Endothelial cell of umbilical vein (primary cell): ENCODE measurements at regions of chr12 and their contacts with region 1.

Region 1: GRCh38 chr12:2034633-2035430 is 18.0 kb upstream of the CACNA1C start:
- DNase-seq: peak; percentile 69
- H3K4me3 ChIP-seq: no peak overlapping the region
- H3K27ac ChIP-seq: no peak overlapping the region
- H3K4me1 ChIP-seq: peaks cover 2% of the 10 kb centered on the region
- H3K27me3 ChIP-seq: peaks cover 12 to 24% of the 10 kb centered on the region in 2 experiments
- CTCF ChIP-seq: peak; percentile 90 to 94
- POLR2A ChIP-seq: no peak

Region 2: GRCh38 chr12:1611803-1612572 is 422.8 kb before region 1 on chr12:
- CTCF ChIA-PET with region 1: no interaction called
- POLR2A ChIA-PET with region 1: no interaction called
- dilution Hi-C with region 1: no loop called
- intact Hi-C with region 1: no loop called
- DNase-seq: peak; percentile 36
- H3K4me3 ChIP-seq: no peak overlapping the region
- H3K27ac ChIP-seq: no peak overlapping the region
- H3K4me1 ChIP-seq: no peaks in the 10 kb centered on the region
- H3K27me3 ChIP-seq: peaks cover 1 to 6% of the 10 kb centered on the region in 2 experiments
- CTCF ChIP-seq: no peak
- POLR2A ChIP-seq: no peak

Region 3: GRCh38 chr12:1804545-1805332 is 230.1 kb before region 1 on chr12:
- CTCF ChIA-PET with region 1: no interaction called
- POLR2A ChIA-PET with region 1: no interaction called
- dilution Hi-C with region 1: no loop called
- intact Hi-C with region 1: loop called (anchors 2 kb)
- DNase-seq: peak; percentile 85
- H3K4me3 ChIP-seq: no peak overlapping the region
- H3K27ac ChIP-seq: no peak overlapping the region
- H3K4me1 ChIP-seq: no peaks in the 10 kb centered on the region
- H3K27me3 ChIP-seq: no peaks in the 10 kb centered on the region
- CTCF ChIP-seq: no peak
- POLR2A ChIP-seq: peak; percentile 67

Region 4: DNA sequence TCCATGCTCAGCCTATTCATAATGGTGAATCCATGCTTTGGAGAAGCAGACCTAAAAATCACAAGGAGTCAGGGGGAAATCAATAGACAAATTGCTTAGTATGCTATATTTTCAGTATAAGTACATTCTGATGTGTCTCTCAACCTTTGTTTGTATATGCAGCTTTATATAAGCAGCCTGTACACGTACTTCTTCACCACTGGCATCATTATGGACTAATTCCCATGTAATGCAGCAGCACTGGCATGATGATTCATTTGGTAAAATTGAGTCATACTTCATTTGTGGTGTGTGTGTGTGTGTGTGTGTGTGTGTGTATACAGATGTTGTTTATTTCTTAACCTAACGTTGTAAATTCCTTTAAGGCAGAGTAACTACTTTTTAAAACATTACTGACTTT is 41.5 kb before region 1 on chr12:
- CTCF ChIA-PET with region 1: interaction called, 3 read pairs
- POLR2A ChIA-PET with region 1: no interaction called
- dilution Hi-C with region 1: no loop called
- intact Hi-C with region 1: loop called (anchors 1 kb)
- DNase-seq: peak; percentile 64
- H3K4me3 ChIP-seq: no peak overlapping the region
- H3K27ac ChIP-seq: no peak overlapping the region
- H3K4me1 ChIP-seq: peaks cover 3% of the 10 kb centered on the region
- H3K27me3 ChIP-seq: no peaks in the 10 kb centered on the region
- CTCF ChIP-seq: no peak
- POLR2A ChIP-seq: no peak

Region 5: GRCh38 chr12:2004113-2004929 is 30.5 kb before region 1 on chr12 and contains the start of gene DCP1B:
- CTCF ChIA-PET with region 1: interaction called, 4 read pairs
- POLR2A ChIA-PET with region 1: no interaction called
- dilution Hi-C with region 1: no loop called
- intact Hi-C with region 1: loop called (anchors 1 kb)
- DNase-seq: peak; percentile 98
- H3K4me3 ChIP-seq: peak within 1 kb of the TSS; percentile 31 to 87 (median 82)
- H3K27ac ChIP-seq: peak within 1 kb of the TSS; percentile 35
- H3K4me1 ChIP-seq: peaks cover 15% of the 10 kb centered on the region
- H3K27me3 ChIP-seq: peaks cover 0 to 6% of the 10 kb centered on the region in 2 experiments
- CTCF ChIP-seq: peak in 1 of 2 donors; percentile 14
- POLR2A ChIP-seq: peak; percentile 64
- total RNA-seq, gene DCP1B: 10.6 and 11.2 TPM in 2 replicates

Region 6: GRCh38 chr12:2057041-2057794 is 22.4 kb after region 1 on chr12:
- CTCF ChIA-PET with region 1: no interaction called
- POLR2A ChIA-PET with region 1: no interaction called
- dilution Hi-C with region 1: no loop called
- intact Hi-C with region 1: no loop called
- DNase-seq: peak; percentile 34
- H3K4me3 ChIP-seq: no peak overlapping the region
- H3K27ac ChIP-seq: no peak overlapping the region
- H3K4me1 ChIP-seq: peaks cover 3% of the 10 kb centered on the region
- H3K27me3 ChIP-seq: peaks cover 36 to 43% of the 10 kb centered on the region in 2 experiments
- CTCF ChIP-seq: peak; percentile 54 to 70
- POLR2A ChIP-seq: no peak